ENCODE measurements at regions of chr5 and their contacts with region 1.

Region 1: GRCh38 chr5:124649491-124650146 is 96.8 kb downstream of the ZNF608 start:
- DNase-seq: peak; percentile 70
- ATAC-seq: peak; percentile 76
- H3K4me3 Mint-ChIP-seq: peak overlapping the region; percentile 66
- H3K27ac Mint-ChIP-seq: peak overlapping the region; percentile 84
- H3K4me1 Mint-ChIP-seq: peaks cover 78% of the 10 kb centered on the region
- H3K27me3 Mint-ChIP-seq: no peaks in the 10 kb centered on the region
- CTCF ChIP-seq: no peak

Region 2: GRCh38 chr5:124034963-124035362 is 614.7 kb before region 1 on chr5:
- CTCF ChIA-PET with region 1: no interaction called
- POLR2A ChIA-PET with region 1: no interaction called
- intact Hi-C with region 1: loop called (anchors 1 kb)
- DNase-seq: no peak
- ATAC-seq: peak; percentile 94
- H3K4me3 Mint-ChIP-seq: peak overlapping the region; percentile 48
- H3K27ac Mint-ChIP-seq: peak overlapping the region; percentile 92
- H3K4me1 Mint-ChIP-seq: peaks cover 52% of the 10 kb centered on the region
- H3K27me3 Mint-ChIP-seq: no peaks in the 10 kb centered on the region
- CTCF ChIP-seq: no peak

Region 3: GRCh38 chr5:124417196-124417595 is 232.4 kb before region 1 on chr5:
- CTCF ChIA-PET with region 1: no interaction called
- POLR2A ChIA-PET with region 1: no interaction called
- intact Hi-C with region 1: no loop called
- DNase-seq: no peak
- ATAC-seq: no peak
- H3K4me3 Mint-ChIP-seq: no peak overlapping the region
- H3K27ac Mint-ChIP-seq: no peak overlapping the region
- H3K4me1 Mint-ChIP-seq: peaks cover 31% of the 10 kb centered on the region
- H3K27me3 Mint-ChIP-seq: peaks cover 3% of the 10 kb centered on the region
- CTCF ChIP-seq: no peak

Region 4: DNA sequence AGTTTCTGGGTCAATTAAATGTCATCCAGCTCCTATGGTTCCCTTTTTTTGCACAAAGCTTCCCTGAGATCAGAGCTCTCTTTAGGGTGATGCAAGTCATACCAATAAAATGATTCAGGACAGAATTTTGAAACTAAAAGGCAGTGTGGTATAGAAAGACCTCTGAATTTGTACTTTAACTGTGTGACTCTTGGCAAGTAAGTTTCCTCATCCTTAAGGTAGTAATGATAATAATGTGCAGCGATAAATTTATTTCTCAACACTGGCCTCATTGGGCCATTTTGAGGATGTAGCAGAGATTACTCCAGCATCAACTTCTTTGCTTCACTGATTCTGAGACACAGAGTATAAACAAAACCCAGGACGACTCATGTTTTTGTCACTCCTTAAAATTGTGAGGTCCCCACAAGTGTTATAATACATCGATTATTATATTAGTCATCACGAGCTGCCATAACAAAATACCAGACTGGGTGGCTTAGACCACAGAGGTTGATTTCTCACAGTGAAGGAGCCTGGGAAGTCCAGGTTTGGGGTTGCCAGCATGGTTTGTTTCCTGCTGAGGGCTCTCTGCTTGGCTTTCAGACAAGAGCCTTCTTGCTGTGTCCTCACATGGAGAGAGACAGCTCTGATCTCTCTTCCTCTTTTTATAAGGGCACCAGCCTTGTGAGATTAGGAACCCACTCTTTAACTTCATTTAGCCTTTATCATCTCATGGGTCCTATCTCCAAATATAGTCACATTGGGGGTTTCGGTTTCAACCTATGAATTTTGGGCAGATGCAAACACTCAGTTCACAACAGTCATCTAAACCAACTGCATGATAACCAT is 196.2 kb before region 1 on chr5:
- CTCF ChIA-PET with region 1: no interaction called
- POLR2A ChIA-PET with region 1: no interaction called
- intact Hi-C with region 1: loop called (anchors 1 kb)
- DNase-seq: peak; percentile 31
- ATAC-seq: peak; percentile 95
- H3K4me3 Mint-ChIP-seq: peak overlapping the region; percentile 67
- H3K27ac Mint-ChIP-seq: peak overlapping the region; percentile 79
- H3K4me1 Mint-ChIP-seq: peaks cover 43% of the 10 kb centered on the region
- H3K27me3 Mint-ChIP-seq: no peaks in the 10 kb centered on the region
- CTCF ChIP-seq: no peak

Region 5: DNA sequence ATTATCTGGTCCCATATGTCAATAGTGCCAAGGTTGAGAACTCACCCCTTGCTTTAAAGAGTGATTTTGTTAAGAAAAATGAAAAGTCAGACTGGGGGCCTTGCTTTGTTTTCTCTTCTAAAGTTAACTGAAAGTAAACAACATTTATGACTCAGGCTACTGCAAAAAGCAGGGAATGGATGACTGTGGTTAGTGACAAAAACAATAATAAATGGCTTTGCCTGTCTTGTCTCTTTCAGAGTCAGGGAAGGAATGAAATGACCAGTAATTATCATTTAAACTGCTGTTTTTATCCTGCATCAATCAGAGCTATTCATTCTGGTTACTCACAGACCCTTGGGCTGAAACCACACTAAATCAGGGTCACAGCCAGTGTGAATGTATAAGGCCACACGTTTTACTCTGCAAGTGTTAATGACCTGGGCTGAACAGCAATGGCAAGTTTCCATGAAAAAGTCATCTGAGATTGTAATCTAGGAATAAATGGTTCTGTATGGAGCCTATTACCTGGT is 15.3 kb before region 1 on chr5:
- CTCF ChIA-PET with region 1: no interaction called
- POLR2A ChIA-PET with region 1: no interaction called
- intact Hi-C with region 1: no loop called
- DNase-seq: no peak
- ATAC-seq: no peak
- H3K4me3 Mint-ChIP-seq: no peak overlapping the region
- H3K27ac Mint-ChIP-seq: no peak overlapping the region
- H3K4me1 Mint-ChIP-seq: peaks cover 15% of the 10 kb centered on the region
- H3K27me3 Mint-ChIP-seq: no peaks in the 10 kb centered on the region
- CTCF ChIP-seq: no peak

Region 6: DNA sequence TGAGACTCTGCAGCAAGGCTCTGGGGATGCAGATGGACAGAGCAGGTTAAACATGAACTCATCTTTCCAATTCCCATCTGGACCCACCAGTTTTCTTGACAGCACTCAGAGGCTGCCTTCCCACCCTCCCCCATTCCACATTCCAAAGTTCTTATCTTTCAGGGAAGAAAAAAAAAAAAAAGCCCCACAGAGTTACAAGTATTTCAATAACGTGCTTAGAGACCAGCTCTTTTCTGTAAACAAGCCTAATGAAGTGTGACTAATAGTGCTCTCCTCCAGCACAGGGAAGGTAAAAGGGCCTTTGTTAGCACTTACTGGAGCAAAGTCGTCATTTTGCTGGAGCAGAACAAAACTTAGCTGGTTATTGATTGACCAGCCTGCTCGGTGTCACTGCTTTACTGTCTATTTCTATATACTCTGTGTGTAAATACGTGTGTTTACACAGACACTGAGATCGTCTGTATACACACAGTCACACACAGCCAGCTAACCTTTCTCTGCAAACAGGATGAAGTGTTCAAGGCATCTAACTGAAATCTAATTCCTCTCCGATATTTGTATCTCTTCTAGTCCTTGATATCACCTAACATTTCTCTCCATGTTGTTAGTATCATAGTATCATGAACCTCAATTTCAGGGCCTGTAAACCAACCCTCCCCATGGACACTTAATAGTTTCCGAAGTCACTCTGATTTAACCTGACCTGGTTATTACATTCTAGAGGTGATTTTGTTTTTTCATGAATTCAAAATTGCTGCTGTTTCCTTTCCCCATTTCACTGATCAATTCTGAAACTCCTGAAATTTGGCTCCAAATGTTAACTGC is 11.9 kb after region 1 on chr5:
- CTCF ChIA-PET with region 1: no interaction called
- POLR2A ChIA-PET with region 1: no interaction called
- intact Hi-C with region 1: no loop called
- DNase-seq: no peak
- ATAC-seq: no peak
- H3K4me3 Mint-ChIP-seq: no peak overlapping the region
- H3K27ac Mint-ChIP-seq: no peak overlapping the region
- H3K4me1 Mint-ChIP-seq: peaks cover 38% of the 10 kb centered on the region
- H3K27me3 Mint-ChIP-seq: no peaks in the 10 kb centered on the region
- CTCF ChIP-seq: no peak

Region 7: GRCh38 chr5:124706729-124707361 is 57.2 kb after region 1 on chr5:
- CTCF ChIA-PET with region 1: interaction called, 3 read pairs
- POLR2A ChIA-PET with region 1: interaction called, 36 read pairs
- intact Hi-C with region 1: loop called (anchors 1 kb)
- DNase-seq: no peak
- ATAC-seq: no peak
- H3K4me3 Mint-ChIP-seq: peak overlapping the region; percentile 67
- H3K27ac Mint-ChIP-seq: peak overlapping the region; percentile 89
- H3K4me1 Mint-ChIP-seq: peaks cover 92% of the 10 kb centered on the region
- H3K27me3 Mint-ChIP-seq: no peaks in the 10 kb centered on the region
- CTCF ChIP-seq: no peak

Region 8: DNA sequence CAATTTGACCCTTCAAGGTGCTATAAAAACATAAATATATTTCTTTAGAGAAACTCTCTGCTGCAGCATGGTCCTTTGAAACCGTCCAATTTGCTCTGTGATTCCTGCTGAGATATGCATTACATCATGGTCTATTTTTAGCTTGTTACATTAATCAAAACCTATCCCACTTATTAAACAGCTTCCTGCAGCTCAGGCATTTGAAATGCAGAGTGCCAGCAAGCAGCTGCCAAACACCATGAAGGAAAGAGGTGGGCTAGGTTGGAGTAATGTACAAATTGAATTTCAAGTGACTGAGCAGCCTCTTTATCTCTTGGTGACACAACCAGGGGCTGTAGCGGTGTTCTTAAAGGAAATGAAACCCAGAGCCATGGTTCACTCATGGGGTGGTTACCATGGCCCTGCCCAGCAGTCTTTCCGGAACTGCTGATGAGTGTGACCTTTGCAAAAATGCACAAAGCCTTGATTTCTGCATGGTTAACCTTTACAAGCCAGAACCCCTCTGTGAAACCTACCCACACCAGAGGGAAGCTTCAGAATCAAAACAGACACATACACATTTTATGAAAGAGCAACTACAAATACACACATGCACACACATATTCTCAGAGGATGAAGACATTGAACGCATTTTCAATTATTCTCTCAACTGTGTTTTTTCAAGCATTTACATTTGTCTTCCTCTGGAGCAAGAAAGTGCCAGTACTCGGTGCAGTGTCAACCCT is 252.6 kb after region 1 on chr5:
- CTCF ChIA-PET with region 1: no interaction called
- POLR2A ChIA-PET with region 1: no interaction called
- intact Hi-C with region 1: loop called (anchors 1 kb)
- DNase-seq: peak; percentile 37
- ATAC-seq: peak; percentile 98
- H3K4me3 Mint-ChIP-seq: peak overlapping the region; percentile 72
- H3K27ac Mint-ChIP-seq: peak overlapping the region; percentile 88
- H3K4me1 Mint-ChIP-seq: peaks cover 40% of the 10 kb centered on the region
- H3K27me3 Mint-ChIP-seq: no peaks in the 10 kb centered on the region
- CTCF ChIP-seq: no peak

Region 9: GRCh38 chr5:125006011-125006685 is 356.5 kb after region 1 on chr5:
- CTCF ChIA-PET with region 1: no interaction called
- POLR2A ChIA-PET with region 1: no interaction called
- intact Hi-C with region 1: loop called (anchors 1 kb)
- DNase-seq: no peak
- ATAC-seq: peak; percentile 67
- H3K4me3 Mint-ChIP-seq: peak overlapping the region; percentile 66
- H3K27ac Mint-ChIP-seq: peak overlapping the region; percentile 90
- H3K4me1 Mint-ChIP-seq: peaks cover 71% of the 10 kb centered on the region
- H3K27me3 Mint-ChIP-seq: no peaks in the 10 kb centered on the region
- CTCF ChIP-seq: no peak